Breast epithelium (tissue), 4 donors: ENCODE measurements at regions of chr2 and their contacts with region 1.

Region 1: GRCh38 chr2:222214885-222215284 is 83.9 kb downstream of the PAX3 start:
- DNase-seq: no peak
- H3K4me3 ChIP-seq: no peak overlapping the region
- H3K27ac ChIP-seq: no peak overlapping the region
- H3K4me1 ChIP-seq: no peaks in the 10 kb centered on the region
- H3K27me3 ChIP-seq: peaks cover 0 to 7% of the 10 kb centered on the region in 2 donors
- CTCF ChIP-seq: no peak
- POLR2A ChIP-seq: no peak

Region 2: DNA sequence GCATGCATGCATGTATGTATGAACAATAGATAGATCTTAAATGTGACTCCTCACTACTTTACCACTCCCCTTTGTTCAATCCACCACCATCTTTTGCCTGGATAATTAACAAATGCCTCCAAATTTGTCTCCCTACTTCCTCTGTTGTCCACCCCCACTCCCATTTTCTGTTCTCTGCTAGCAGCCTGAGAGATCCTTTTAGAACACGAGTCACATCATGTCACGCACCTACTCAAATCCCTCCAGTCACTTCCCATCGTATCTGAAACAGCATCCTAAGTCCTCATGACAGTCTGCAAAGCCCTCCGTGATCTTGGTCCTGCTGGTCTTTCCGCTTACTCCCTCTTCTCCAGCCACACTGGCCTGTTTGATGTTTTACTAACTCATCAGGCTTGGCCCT is 1170.1 kb before region 1 on chr2:
- intact Hi-C with region 1: loop called (anchors 5 kb)
- DNase-seq: no peak
- H3K4me3 ChIP-seq: no peak overlapping the region
- H3K27ac ChIP-seq: no peak overlapping the region
- H3K4me1 ChIP-seq: no peaks in the 10 kb centered on the region
- H3K27me3 ChIP-seq: no peaks in the 10 kb centered on the region
- CTCF ChIP-seq: no peak
- POLR2A ChIP-seq: no peak

Region 3: GRCh38 chr2:222160944-222161343 is 53.9 kb before region 1 on chr2:
- intact Hi-C with region 1: no loop called
- DNase-seq: no peak
- H3K4me3 ChIP-seq: no peak overlapping the region
- H3K27ac ChIP-seq: no peak overlapping the region
- H3K4me1 ChIP-seq: no peaks in the 10 kb centered on the region
- H3K27me3 ChIP-seq: peaks cover 0 to 14% of the 10 kb centered on the region in 2 donors
- CTCF ChIP-seq: no peak
- POLR2A ChIP-seq: no peak

Region 4: GRCh38 chr2:222238072-222238471 is 23.2 kb after region 1 on chr2:
- intact Hi-C with region 1: loop called (anchors 1 kb)
- DNase-seq: no peak
- H3K4me3 ChIP-seq: no peak overlapping the region
- H3K27ac ChIP-seq: no peak overlapping the region
- H3K4me1 ChIP-seq: no peaks in the 10 kb centered on the region
- H3K27me3 ChIP-seq: peaks cover 0 to 26% of the 10 kb centered on the region in 2 donors
- CTCF ChIP-seq: no peak
- POLR2A ChIP-seq: no peak